Activated naive CD4-positive, alpha-beta T cell treated with anti-CD3 and anti-CD28 coated beads for 36 hours (primary cell): ENCODE measurements at regions of chr18 and their contacts with region 1.

Region 1: DNA sequence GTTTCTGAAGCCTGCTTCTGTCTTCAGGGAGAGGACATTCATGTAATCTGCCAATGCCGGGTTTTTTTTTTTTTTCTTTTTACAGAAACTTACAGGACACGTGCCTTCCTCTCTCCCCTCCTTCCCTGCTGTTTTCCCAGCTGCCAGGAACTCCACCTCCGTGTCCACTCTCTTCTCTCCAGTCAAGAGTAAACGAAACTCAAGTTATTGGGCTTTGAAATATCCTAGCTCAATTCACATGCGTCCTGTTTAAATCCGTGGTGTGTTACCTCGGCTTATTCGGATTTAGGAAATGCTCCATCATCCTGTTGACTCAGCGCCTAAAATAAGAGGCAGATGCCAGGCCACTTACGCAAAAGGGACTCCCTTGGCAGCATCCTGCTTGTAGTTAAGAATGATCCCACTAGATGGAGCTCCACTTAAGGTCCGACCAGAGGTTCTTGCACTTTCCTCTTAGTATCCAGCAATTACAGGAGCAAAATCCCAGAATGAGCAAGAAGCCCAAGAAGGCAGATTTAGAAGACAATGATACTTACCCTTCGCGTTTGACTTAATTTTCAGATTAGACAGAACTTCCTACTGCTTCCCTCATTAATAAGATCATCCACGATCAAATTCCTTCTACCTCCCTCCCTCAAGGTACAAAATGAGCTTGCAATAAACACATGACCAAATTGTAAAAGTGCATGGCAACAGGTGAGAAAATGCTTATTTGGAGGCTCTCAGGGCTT is 97.2 kb upstream of the ZCCHC2 start:
- DNase-seq: peak; percentile 80
- H3K4me3 Mint-ChIP-seq: peak overlapping the region; percentile 3
- H3K27ac Mint-ChIP-seq: peak overlapping the region; percentile 19
- H3K4me1 Mint-ChIP-seq: peaks cover 22% of the 10 kb centered on the region
- H3K27me3 Mint-ChIP-seq: no peaks in the 10 kb centered on the region

Region 2: DNA sequence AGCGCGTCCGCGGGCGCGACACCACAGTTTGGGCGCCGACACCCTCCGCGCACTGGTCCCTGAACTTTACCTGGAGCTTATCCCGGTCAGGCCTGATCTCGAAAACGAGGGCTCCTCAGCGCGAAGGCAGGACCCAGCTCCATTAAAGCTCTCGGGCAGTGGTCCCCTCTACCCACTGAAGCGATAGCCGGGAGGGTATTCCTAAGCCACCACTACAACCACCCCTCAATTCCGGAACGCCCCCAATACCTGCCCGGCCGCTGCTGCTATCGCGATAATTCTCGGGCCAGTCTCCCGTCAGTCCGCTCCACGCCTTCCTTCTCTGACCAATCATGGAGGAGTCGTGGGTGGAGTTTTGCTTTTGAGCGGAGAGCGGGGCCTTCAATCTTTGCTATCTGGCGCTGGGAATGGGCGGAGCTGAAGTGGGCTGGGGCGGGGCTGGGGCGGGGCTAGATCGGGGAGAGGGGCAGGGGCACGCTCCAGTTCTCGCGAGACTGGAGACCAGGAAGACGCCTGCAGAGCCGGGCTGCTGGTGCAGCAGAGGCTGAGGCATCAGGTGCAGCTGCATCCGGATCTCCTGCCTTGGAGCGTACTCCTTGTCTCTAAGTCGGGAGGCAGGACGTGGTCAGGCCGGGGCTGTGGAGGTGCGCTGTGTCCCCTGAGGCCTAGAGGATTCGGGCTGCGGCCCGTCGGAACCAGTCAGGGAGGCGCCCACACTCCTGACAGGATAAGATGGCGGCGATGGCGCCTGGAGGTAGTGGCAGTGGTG is 238.7 kb before region 1 on chr18 and contains the starts of genes PIGN and RELCH:
- CTCF ChIA-PET with region 1: interaction called, 5 read pairs
- intact Hi-C with region 1: loop called (anchors 1 kb)
- DNase-seq: peak; percentile 97
- H3K4me3 Mint-ChIP-seq: peak within 1 kb of the TSS; percentile 99
- H3K27ac Mint-ChIP-seq: peak within 1 kb of the TSS; percentile 90
- H3K4me1 Mint-ChIP-seq: peaks cover 45% of the 10 kb centered on the region
- H3K27me3 Mint-ChIP-seq: no peaks in the 10 kb centered on the region
- total RNA-seq, gene PIGN: 21.2 to 22.6 TPM
- total RNA-seq, gene RELCH: 15.7 to 16.3 TPM

Region 3: GRCh38 chr18:62196980-62197379 is 228.7 kb before region 1 on chr18:
- CTCF ChIA-PET with region 1: no interaction called
- intact Hi-C with region 1: no loop called
- DNase-seq: no peak
- H3K4me3 Mint-ChIP-seq: no peak overlapping the region
- H3K27ac Mint-ChIP-seq: no peak overlapping the region
- H3K4me1 Mint-ChIP-seq: peaks cover 64% of the 10 kb centered on the region
- H3K27me3 Mint-ChIP-seq: no peaks in the 10 kb centered on the region

Region 4: GRCh38 chr18:62368100-62368499 is 57.5 kb before region 1 on chr18:
- CTCF ChIA-PET with region 1: no interaction called
- intact Hi-C with region 1: loop called (anchors 2 kb)
- DNase-seq: no peak
- H3K4me3 Mint-ChIP-seq: no peak overlapping the region
- H3K27ac Mint-ChIP-seq: no peak overlapping the region
- H3K4me1 Mint-ChIP-seq: peaks cover 6% of the 10 kb centered on the region
- H3K27me3 Mint-ChIP-seq: no peaks in the 10 kb centered on the region

Region 5: DNA sequence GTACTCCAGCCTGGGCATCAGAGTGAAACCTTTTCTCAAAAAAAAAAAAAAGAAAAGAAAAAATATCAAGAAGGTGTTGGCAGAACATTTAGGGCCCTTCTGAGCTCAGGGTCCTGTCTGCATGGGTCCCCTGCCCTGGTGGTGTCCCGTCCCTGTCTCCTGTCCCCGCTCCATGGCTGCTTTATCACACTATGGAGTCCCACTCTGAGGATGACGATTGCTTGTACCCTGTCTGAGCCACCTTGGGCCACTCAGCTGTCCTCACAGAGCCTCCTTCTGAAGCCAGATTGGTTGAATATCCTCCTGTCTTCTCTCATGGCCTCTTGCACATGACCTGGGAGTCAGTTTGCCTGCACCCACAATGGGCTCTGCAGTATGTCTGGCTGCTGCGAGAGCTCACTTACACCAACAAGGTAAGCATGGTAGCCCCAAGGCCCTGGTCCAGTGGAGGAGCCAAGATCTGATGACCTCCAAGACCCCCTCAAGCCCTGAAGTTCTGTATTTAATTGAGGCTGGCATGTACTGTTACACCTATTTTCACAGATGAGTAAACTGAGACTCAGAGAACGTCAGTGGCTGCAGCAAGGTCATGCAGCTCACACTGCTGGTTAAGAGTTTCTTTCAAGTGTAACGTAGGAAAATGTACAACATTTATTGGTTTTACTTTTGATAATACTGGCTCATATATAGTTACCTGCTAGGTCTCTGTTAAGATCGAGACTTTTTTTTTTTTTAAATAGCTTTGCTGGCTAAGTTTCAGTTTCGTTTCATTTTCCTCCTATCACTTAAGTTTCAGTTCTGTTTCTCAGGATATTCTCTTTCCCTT is 80.3 kb after region 1 on chr18:
- CTCF ChIA-PET with region 1: interaction called, 6 read pairs
- intact Hi-C with region 1: loop called (anchors 1 kb)
- DNase-seq: peak; percentile 63
- H3K4me3 Mint-ChIP-seq: peak overlapping the region; percentile 55
- H3K27ac Mint-ChIP-seq: peak overlapping the region; percentile 86
- H3K4me1 Mint-ChIP-seq: peaks cover 20% of the 10 kb centered on the region
- H3K27me3 Mint-ChIP-seq: no peaks in the 10 kb centered on the region

Region 6: GRCh38 chr18:62682371-62682770 is 256.7 kb after region 1 on chr18:
- CTCF ChIA-PET with region 1: no interaction called
- intact Hi-C with region 1: no loop called
- DNase-seq: no peak
- H3K4me3 Mint-ChIP-seq: no peak overlapping the region
- H3K27ac Mint-ChIP-seq: no peak overlapping the region
- H3K4me1 Mint-ChIP-seq: no peaks in the 10 kb centered on the region
- H3K27me3 Mint-ChIP-seq: no peaks in the 10 kb centered on the region

Region 7: GRCh38 chr18:62784966-62785413 is 359.4 kb after region 1 on chr18:
- CTCF ChIA-PET with region 1: no interaction called
- intact Hi-C with region 1: loop called (anchors 1 kb)
- DNase-seq: no peak
- H3K4me3 Mint-ChIP-seq: no peak overlapping the region
- H3K27ac Mint-ChIP-seq: no peak overlapping the region
- H3K4me1 Mint-ChIP-seq: peaks cover 37% of the 10 kb centered on the region
- H3K27me3 Mint-ChIP-seq: peaks cover 5% of the 10 kb centered on the region

Region 8: GRCh38 chr18:63161761-63162195 is 736.1 kb after region 1 on chr18:
- CTCF ChIA-PET with region 1: no interaction called
- intact Hi-C with region 1: loop called (anchors 1 kb)
- DNase-seq: peak; percentile 94
- H3K4me3 Mint-ChIP-seq: peak overlapping the region; percentile 74
- H3K27ac Mint-ChIP-seq: peak overlapping the region; percentile 99
- H3K4me1 Mint-ChIP-seq: peaks cover 93% of the 10 kb centered on the region
- H3K27me3 Mint-ChIP-seq: no peaks in the 10 kb centered on the region